Dorsolateral prefrontal cortex (tissue), 120 donors: ENCODE measurements at regions of chr15 and their contacts with region 1.

Region 1: GRCh38 chr15:31272558-31273257 is 53.9 kb upstream of the KLF13 start:
- DNase-seq: peak in 4 of 10 donors; percentile 28 to 91 (median 34)
- H3K4me3 ChIP-seq: no peak overlapping the region
- H3K27ac ChIP-seq: peak overlapping the region in 38 of 59 donors; percentile 9 to 88 (median 36)
- H3K27me3 ChIP-seq: no peaks in the 10 kb centered on the region
- CTCF ChIP-seq: no peak

Region 2: DNA sequence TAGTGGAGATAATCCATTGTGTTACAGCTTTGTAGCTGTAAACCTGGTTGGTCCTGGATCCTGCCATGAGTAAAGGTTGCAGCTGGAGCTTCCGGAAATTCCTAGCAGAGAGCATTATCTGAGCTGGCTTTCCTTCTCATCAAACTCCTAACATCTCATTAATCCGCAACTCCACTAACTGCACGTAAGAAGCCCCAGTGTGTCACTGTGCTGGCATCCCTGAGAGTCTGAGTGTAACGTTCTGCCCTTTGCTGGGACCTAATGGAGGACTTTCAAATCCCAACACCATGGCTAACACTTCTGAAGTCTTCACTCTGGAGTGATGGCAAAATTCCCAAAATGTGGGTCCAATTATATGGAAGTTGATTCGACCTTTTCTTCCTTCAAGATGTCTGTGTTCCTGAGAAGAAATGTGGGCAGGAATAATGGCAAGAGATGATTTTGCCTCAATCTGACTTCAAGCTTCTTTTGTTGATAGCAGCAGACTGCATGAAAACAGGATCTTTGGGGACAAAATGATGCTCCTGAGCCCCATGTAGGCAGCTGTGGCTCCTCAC is 161.5 kb before region 1 on chr15:
- intact Hi-C with region 1: no loop called
- DNase-seq: no peak
- H3K4me3 ChIP-seq: no peak overlapping the region
- H3K27ac ChIP-seq: no peak overlapping the region
- H3K27me3 ChIP-seq: no peaks in the 10 kb centered on the region
- CTCF ChIP-seq: no peak

Region 3: GRCh38 chr15:31236184-31237042 is 36.3 kb before region 1 on chr15:
- intact Hi-C with region 1: loop called in 1 of 2 experiments (anchors 5 kb)
- DNase-seq: peak; percentile 41 to 91 (median 74)
- H3K4me3 ChIP-seq: peak overlapping the region in 40 of 59 donors; percentile 4 to 53 (median 26)
- H3K27ac ChIP-seq: peak overlapping the region; percentile 43 to 92 (median 82)
- H3K27me3 ChIP-seq: no peaks in the 10 kb centered on the region
- CTCF ChIP-seq: peak in 19 of 56 donors; percentile 8 to 38 (median 21)